ENCODE measurements at regions of chr17 and their contacts with region 1.

Region 1: GRCh38 chr17:77088455-77089123 is 52.2 kb upstream of the SEC14L1 start:
- DNase-seq: peak; percentile 90
- CTCF ChIP-seq: peak; percentile 74

Region 2: GRCh38 chr17:77068915-77069314 is 19.7 kb before region 1 on chr17:
- CTCF ChIA-PET with region 1: interaction called, 10 read pairs
- POLR2A ChIA-PET with region 1: no interaction called
- DNase-seq: no peak
- CTCF ChIP-seq: no peak

Region 3: GRCh38 chr17:77145612-77146245 is 57.1 kb after region 1 on chr17:
- CTCF ChIA-PET with region 1: interaction called, 21 read pairs
- POLR2A ChIA-PET with region 1: interaction called, 4 read pairs
- DNase-seq: peak; percentile 63
- CTCF ChIP-seq: no peak

Region 4: DNA sequence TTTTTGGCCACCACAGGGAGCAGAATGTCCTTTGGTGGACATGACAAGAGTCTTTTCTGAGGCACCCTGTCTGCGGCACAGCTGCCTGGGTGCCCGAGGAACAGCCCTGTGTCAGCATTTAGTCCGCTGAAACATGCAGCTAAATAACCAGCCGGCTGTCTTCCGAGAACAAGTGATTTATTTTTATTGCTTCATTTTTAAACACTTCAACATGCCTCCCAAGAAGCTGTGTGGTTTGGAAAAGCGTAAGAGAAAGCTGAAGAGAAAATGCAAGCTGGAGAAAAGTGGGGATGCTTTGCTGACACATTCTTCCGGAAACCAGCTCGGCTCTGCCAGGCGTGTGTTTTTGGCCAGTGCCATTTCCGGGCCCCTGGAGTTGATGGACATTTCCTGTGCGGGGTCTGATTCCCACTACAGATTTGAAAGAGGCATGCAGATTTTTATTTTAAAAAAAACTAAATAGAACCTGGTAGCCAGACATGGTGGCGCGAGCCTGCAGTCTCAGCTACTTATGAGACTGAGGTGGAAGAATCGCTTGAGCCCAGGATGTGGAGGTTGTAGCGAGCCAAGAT is 146.9 kb after region 1 on chr17:
- CTCF ChIA-PET with region 1: interaction called, 10 read pairs
- POLR2A ChIA-PET with region 1: interaction called, 3 read pairs
- DNase-seq: peak; percentile 51
- CTCF ChIP-seq: no peak

Region 5: DNA sequence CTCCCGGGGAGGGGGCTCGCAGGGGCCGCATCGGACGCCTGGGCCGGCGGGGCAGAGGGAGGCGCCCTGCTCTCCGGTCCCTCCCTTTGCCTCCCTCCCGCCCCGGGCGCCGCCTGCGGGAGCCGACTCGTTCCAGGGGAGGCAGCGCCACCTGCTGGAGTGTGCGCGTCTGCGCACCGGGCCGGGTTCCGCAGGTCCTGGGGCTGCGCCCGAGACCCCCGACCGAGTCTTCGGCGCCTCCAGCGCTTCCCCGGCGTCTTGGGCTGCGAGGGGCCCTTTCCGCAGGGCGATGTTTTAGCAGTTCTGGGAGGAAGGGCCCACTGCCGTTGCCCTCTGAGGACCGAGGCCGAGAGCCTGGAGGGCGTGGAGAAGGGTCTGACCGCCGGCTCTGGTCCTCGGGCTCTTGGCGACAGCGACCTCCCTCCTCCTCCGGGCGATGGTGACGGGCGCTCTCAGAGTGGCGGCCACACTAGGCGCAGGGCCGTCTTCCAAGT is 158.5 kb after region 1 on chr17:
- CTCF ChIA-PET with region 1: interaction called, 23 read pairs
- POLR2A ChIA-PET with region 1: no interaction called
- DNase-seq: peak; percentile 93
- CTCF ChIP-seq: peak; percentile 94

Measured in GM10248 (cell line).